ENCODE measurements at regions of chr19 and their contacts with region 1.

Region 1: GRCh38 chr19:42553292-42554045 is 25.2 kb upstream of the CEACAM1 start:
- DNase-seq: peak; percentile 27
- H3K4me3 ChIP-seq: no peak overlapping the region
- H3K27ac ChIP-seq: no peak overlapping the region
- H3K27me3 ChIP-seq: peaks cover 17% of the 10 kb centered on the region
- CTCF ChIP-seq: no peak

Region 2: GRCh38 chr19:42501733-42502132 is 51.7 kb before region 1 on chr19:
- CTCF ChIA-PET with region 1: interaction called, 11 read pairs
- POLR2A ChIA-PET with region 1: no interaction called
- DNase-seq: no peak
- H3K4me3 ChIP-seq: no peak overlapping the region
- H3K27ac ChIP-seq: no peak overlapping the region
- H3K27me3 ChIP-seq: peaks cover 16% of the 10 kb centered on the region
- CTCF ChIP-seq: no peak

Region 3: DNA sequence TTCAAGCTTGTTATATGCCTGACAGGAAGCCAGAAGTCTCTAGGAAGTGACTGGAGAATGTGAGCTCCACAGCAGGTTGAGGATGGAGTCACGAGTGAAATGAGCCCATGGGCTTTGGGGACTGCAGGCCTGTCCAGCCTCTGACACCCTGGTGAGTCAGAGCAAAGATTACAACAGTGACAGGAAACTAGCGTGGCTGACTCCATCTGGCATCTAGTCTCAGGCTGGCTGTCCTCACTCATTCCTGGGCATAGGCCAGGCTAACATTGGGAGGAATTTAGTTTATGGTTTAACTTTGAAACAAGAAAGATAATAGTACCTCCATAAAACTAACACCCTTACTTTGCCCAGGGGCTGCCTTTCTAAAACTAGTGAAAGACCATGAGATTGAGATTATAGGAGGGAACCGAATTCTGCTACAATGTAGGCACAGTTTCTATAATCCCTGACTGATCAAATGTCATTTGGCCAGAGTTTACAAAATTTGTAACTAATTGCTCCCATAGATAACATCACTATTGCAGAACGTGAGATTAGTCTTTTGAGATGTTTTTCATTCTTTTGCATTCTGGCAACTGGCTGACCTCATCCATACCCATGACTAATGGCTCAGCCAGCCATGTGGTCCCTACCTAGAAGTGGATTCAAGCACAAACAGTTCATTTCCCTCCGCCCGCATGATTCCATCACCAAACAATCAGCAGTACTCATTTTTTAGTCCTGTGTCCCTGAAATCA is 297.7 kb after region 1 on chr19:
- CTCF ChIA-PET with region 1: no interaction called
- POLR2A ChIA-PET with region 1: no interaction called
- DNase-seq: peak; percentile 89
- H3K4me3 ChIP-seq: no peak overlapping the region
- H3K27ac ChIP-seq: peak overlapping the region; percentile 94
- H3K27me3 ChIP-seq: no peaks in the 10 kb centered on the region
- CTCF ChIP-seq: no peak

Region 4: DNA sequence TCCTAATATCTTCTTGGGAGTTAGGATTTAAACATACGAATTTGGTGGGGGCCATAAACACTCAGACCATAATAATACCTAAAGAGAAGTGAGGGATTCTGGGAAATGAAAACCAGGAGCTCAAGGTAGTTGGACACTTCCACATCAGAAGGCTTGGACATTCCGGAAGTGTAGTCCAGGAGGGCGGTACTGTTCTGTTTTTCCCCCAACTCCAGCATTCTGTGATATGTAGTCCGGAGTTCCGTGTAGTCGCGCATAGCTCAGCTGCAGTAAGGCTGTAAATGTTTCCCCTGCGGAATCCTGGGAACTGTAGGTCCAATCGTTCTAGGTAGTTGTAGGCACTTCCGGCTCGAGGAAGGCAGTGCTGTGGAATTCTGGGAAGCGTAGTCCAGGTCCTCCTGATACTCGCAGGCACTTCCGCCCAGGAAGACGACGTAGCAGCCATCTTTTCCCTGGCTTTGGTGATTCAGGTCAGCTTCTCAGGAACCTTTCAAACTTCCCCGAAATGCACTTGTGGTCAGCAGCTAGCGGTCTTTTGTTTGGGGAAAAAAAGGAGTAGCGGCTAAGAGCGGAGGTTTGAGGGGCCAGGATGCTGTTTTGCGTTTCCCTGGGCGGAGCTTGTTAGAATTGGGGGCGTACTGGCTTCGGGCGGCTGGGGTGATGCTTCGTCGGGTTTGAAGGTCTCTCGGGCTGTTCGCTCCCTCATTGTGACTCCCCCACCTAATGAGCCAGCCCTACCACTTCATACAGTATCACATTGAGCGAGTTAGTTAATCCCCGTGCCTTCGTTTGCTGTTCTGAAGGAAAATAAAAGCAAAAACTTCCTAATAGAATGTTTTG is 1611.4 kb after region 1 on chr19 and contains the start of gene ZNF226:
- CTCF ChIA-PET with region 1: no interaction called
- POLR2A ChIA-PET with region 1: interaction called, 16 read pairs
- DNase-seq: peak; percentile 97
- H3K4me3 ChIP-seq: peak within 1 kb of the TSS; percentile 77
- H3K27ac ChIP-seq: peak within 1 kb of the TSS; percentile 92
- H3K27me3 ChIP-seq: no peaks in the 10 kb centered on the region
- CTCF ChIP-seq: no peak
- polyA plus RNA-seq, gene ZNF226: 30.5 and 36.1 TPM in 2 replicates